HEK293T (cell line): ENCODE measurements at regions of chr14 and their contacts with region 1.

Region 1: DNA sequence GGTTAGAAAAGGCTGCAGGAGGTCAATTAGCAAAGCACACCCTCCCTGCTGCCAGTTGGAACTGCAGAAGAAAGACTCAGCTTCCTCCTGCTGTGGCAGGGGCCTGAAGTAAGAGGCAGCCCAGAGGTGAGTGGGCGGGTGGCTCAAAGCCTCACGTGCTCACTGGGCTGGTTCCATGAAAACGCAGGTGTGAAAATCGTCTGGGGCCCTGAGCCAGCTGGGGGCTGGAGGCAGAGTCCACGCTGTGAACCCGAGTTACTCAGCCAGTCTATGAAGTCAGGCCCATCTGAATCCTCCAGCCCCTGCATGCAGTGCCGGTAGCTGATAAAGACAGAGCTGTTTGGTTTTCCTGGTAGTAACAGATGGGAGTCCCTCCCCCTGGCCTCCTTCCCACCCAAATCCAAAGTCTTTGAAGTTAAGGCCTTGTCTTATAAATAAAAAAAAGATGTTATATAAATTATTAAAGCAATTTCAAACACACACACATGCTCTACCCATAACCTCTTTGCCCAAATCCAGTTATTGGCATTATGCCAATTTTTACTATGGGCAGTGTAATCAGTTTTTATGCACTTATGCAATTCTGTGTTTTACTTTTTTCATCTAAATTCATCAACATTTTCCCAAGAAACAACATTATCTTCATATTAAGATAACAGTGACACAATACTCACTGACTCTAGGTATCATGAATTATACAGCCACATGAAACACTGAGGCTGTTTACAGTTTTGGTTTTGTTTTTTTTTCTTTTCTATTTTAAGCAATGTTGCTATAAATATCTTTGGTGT is 57.9 kb upstream of the PNMA1 start:
- DNase-seq: peak; percentile 46

Region 2: GRCh38 chr14:73759714-73760597 is 12.1 kb before region 1 on chr14:
- CTCF ChIA-PET with region 1: interaction called, 8 read pairs
- POLR2A ChIA-PET with region 1: interaction called, 10 read pairs
- DNase-seq: peak; percentile 88